Transverse colon (tissue), 4 donors: ENCODE measurements at regions of chr19 and their contacts with region 1.

Region 1: DNA sequence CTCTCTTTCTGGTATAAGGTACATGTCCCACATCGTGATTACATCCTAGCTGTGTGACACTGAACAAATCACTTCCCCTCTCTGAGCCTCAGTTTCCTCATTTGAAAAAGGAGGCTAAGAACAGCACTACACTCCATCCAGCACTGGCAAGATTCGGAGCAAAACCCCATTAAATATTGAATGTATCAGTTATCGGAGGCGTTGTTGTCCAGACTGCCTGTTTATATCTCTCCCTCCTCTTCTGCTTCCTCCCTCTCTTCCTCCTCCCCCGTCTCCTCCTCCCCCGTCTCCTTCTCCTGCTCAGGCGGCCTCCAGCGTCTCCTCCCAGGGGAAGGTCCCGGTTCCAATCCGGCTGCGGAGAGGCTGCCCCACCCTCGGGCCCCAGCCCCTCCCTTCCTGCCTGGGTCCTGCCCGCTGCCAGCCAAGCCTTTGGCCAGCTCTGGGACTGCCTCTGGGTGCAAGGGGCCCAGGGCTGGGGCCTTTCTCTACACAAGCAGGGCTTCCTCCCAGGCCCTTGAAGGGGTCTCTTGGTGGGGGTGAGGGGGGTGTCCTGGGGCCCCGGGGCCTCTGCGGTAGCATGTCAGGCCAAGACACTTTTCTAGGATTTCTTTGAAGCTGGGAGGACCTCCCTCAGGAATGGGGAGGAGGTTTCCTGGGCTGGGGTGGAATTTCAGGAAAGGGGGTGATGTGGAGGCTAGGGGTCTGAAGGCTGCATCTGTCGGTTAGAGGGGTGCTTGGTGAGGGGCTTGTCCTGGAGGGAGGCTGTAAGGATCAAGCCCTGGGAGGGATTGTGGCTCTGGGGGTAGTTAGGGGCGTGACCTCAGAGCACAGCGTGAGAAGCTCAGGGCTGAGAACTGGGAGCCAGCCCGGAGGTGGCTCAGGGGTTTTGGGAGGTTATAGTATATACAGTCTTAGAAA is 1.9 kb downstream of the RRAS start:
- DNase-seq: peak; percentile 91
- H3K4me3 ChIP-seq: peak overlapping the region in 3 of 4 donors; percentile 19 to 85 (median 76)
- H3K27ac ChIP-seq: peak overlapping the region; percentile 97 to 100 (median 100)
- H3K4me1 ChIP-seq: peaks cover 4 to 53% (median 37%) of the 10 kb centered on the region in 4 donors
- H3K27me3 ChIP-seq: no peaks in the 10 kb centered on the region
- CTCF ChIP-seq: no peak
- EP300 ChIP-seq: no peak
- POLR2A ChIP-seq: peak; percentile 54

Region 2: DNA sequence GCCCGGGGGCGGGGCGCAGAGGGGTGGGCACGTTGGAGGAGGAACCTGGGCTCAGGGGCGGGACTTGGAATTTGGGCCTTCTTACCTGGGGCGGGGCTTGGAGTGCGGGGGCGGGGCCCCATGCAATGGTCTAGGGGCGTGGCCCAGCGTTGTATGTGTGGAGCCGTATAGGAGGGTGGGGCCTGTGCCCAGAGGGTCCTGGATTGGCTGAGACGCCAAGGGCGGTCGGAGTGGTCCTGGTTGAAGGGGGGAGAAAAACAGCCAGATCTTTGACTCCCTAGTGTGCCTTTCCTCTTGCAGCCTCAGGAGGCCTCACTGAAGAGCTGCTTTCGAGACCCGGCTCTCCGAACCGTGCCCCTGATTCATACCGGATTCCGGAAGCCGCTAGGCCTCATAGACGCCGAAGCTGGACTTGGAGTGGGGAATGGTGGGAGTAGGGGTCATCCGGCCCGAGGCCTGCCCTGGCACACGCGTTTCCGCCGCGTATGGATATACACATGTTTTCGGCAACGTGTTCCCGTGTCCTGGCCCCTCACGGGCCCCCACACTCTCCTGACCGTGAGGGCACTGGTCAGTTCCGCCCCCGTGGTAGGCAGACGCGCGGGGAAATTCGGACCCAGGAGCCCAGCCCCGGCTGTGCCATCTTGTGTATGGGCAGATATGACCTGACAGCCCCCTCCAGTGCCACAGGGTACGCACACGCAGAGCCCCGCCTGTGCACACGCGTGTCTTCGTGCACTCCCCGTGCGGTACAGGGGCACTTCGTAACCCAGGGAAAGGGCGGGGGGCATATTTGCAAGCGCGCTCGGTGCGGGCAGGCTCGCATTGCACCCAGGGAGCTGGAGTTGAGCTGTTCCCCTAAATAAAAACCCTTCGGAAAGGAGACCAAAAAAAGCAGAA is 47.8 kb before region 1 on chr19:
- in situ Hi-C with region 1: no loop called
- intact Hi-C with region 1: loop called (anchors 5 kb)
- DNase-seq: peak; percentile 98
- H3K4me3 ChIP-seq: peak overlapping the region; percentile 68 to 88 (median 78)
- H3K27ac ChIP-seq: peak overlapping the region; percentile 92 to 97 (median 93)
- H3K4me1 ChIP-seq: peaks cover 17 to 32% (median 22%) of the 10 kb centered on the region in 4 donors
- H3K27me3 ChIP-seq: no peaks in the 10 kb centered on the region
- CTCF ChIP-seq: peak in 2 of 5 experiments; percentile 20 to 33
- EP300 ChIP-seq: no peak
- POLR2A ChIP-seq: peak; percentile 85